OCI-LY7 (cell line): ENCODE measurements at regions of chr5 and their contacts with region 1.

Region 1: DNA sequence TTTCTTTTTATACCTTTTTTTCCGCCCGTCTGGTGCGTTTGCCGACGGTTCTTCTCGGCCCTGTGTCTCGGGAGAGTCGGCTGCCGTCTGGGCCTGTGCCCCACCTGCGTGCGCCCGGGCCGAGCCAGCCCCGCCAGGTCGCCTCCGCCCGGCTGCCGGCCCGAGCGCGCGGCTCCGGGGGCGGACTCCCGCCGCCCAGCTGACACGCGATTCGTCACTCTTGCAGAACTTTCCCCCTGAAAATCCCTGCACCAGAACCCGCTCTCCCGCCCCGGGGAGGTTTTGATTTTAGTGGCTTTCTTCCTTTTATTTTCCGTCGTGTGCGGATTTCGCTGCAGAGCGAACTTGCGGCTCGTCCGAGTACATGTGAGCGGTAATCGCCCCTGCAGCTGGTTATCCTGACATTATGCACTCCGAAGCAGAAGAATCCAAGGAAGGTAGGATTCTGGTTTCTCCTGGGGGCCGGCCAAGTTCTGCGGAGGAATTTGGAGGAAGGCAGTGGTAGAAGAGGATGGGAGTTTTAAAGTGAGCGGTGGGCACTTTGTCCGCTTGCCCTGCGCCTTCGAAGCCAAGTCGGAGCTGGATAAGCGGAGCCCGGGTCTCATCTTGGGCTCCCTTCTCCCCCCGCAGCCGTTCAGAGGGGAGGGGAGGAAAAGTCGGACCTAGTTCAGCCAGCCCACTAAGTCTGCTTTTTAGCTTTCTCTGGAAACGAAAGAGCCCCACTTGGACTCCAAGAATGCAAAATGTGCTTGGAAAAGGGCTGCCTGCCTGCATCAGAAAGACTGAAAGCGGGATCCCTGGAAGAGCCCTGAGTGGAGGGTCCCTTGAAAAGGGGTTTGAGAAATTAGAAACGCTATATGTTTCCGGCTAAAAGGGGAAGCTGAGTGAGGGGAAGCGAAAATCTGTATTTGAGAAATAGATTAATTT is at the start of gene TNFAIP8:
- DNase-seq: peak; percentile 69
- H3K4me3 ChIP-seq: peak within 1 kb of the TSS; percentile 73
- H3K27ac ChIP-seq: peak within 1 kb of the TSS; percentile 91
- H3K4me1 ChIP-seq: peaks cover 91% of the 10 kb centered on the region
- CTCF ChIP-seq: no peak
- total RNA-seq, gene TNFAIP8: 92.9 and 95.1 TPM in 2 replicates

Region 2: GRCh38 chr5:119067450-119067849 is 288.5 kb before region 1 on chr5:
- CTCF ChIA-PET with region 1: no interaction called
- POLR2A ChIA-PET with region 1: no interaction called
- intact Hi-C with region 1: no loop called
- DNase-seq: no peak
- H3K4me3 ChIP-seq: no peak overlapping the region
- H3K27ac ChIP-seq: no peak overlapping the region
- H3K4me1 ChIP-seq: peaks cover 15% of the 10 kb centered on the region
- CTCF ChIP-seq: no peak

Region 3: GRCh38 chr5:119367502-119368237 is 11.7 kb after region 1 on chr5:
- CTCF ChIA-PET with region 1: interaction called, 3 read pairs
- POLR2A ChIA-PET with region 1: interaction called, 15 read pairs
- intact Hi-C with region 1: no loop called
- DNase-seq: no peak
- H3K4me3 ChIP-seq: peak overlapping the region; percentile 14
- H3K27ac ChIP-seq: no peak overlapping the region
- H3K4me1 ChIP-seq: peaks cover 44% of the 10 kb centered on the region
- CTCF ChIP-seq: no peak

Region 4: DNA sequence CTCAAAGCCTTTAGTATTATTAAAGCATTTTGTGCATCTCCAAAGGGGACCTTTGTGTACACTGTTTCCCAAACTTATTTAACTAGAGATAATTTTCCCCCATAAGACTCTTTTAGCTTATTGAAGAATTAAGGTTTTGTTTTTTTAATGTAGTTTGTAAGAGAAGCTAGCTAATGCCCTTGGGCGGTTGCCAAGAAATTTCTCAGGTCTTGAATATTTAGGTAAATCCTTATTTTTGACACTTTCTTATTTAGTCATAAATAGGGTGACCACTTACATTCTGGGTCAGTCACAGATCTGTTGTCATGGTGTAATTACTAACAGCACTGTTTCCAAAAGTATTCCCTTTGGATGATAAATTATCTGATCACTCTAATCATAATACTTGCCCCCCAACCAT is 27.1 kb after region 1 on chr5:
- CTCF ChIA-PET with region 1: interaction called, 3 read pairs
- POLR2A ChIA-PET with region 1: interaction called, 11 read pairs
- intact Hi-C with region 1: no loop called
- DNase-seq: no peak
- H3K4me3 ChIP-seq: no peak overlapping the region
- H3K27ac ChIP-seq: no peak overlapping the region
- H3K4me1 ChIP-seq: peaks cover 44% of the 10 kb centered on the region
- CTCF ChIP-seq: no peak

Region 5: GRCh38 chr5:119515192-119515591 is 159.2 kb after region 1 on chr5:
- CTCF ChIA-PET with region 1: no interaction called
- POLR2A ChIA-PET with region 1: no interaction called
- intact Hi-C with region 1: no loop called
- DNase-seq: no peak
- H3K4me3 ChIP-seq: no peak overlapping the region
- H3K27ac ChIP-seq: no peak overlapping the region
- H3K4me1 ChIP-seq: no peaks in the 10 kb centered on the region
- CTCF ChIP-seq: no peak